ENCODE measurements at regions of chr9 and their contacts with region 1.

Region 1: DNA sequence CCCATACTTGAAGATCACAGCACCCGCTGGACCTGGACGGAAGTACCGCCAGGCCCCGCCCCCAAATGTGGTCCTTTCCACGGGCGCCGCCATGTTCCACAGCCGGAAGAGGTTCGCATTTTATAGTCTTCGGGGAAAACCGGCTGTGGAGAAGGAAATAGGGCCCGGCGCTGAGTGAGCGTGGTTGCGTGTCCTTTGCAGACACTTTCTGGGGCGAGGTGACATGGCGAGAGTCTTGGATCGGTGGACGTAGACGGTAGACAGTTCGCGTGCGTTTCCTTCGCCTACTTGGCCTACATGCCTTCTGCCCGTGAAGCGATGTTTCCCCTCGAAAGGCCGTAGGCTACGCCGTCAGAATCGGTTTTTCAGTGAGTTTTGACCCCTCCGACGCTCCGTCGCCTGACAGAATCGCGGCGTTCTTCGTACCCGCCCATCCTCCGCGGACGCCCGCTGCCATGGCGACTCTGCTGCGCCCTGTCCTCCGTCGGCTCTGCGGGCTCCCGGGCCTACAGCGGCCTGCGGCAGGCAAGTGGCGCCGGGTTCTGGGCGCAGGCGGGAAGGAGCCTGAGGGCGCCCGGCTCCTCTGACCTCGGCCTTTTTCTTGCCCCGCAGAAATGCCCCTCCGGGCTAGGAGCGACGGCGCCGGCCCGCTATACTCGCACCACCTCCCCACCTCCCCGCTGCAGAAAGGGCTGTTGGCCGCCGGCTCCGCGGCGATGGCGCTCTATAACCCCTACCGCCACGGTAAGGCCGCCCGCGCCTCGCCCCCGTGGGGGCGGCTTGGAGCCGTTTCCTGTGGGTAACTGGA is at the starts of genes COQ4 and TRUB2:
- DNase-seq: peak; percentile 89
- ATAC-seq: peak; percentile 93
- H3K4me3 ChIP-seq: peak within 1 kb of the TSS; percentile 93 to 99 (median 94)
- H3K27ac ChIP-seq: peak within 1 kb of the TSS; percentile 93
- H3K4me1 ChIP-seq: peaks cover 23% of the 10 kb centered on the region
- H3K27me3 ChIP-seq: no peaks in the 10 kb centered on the region; a peak in 1 of 5 replicates
- CTCF ChIP-seq: no peak; the same call in 1 of the 2 replicates
- EP300 ChIP-seq: peak in 1 of 2 experiments; percentile 12; a peak in 1 of 4 replicates
- POLR2A ChIP-seq: peak; percentile 80 to 85; a peak in 3 of 4 replicates
- RAD21 ChIP-seq: peak; percentile 25
- total RNA-seq, gene COQ4: 16.2 and 26.1 TPM in 2 replicates
- total RNA-seq, gene TRUB2: 41.2 and 57.8 TPM in 2 replicates

Region 2: GRCh38 chr9:128339771-128340690 is 17.4 kb after region 1 on chr9 and contains the start of gene SLC27A4:
- CTCF ChIA-PET with region 1: no interaction called
- POLR2A ChIA-PET with region 1: no interaction called
- in situ Hi-C with region 1: no loop called
- intact Hi-C with region 1: loop called (anchors 2 kb)
- DNase-seq: peak; percentile 70
- ATAC-seq: peak; percentile 86
- H3K4me3 ChIP-seq: peak within 1 kb of the TSS; percentile 85 to 95 (median 87)
- H3K27ac ChIP-seq: peak within 1 kb of the TSS; percentile 68
- H3K4me1 ChIP-seq: peaks cover 19% of the 10 kb centered on the region
- H3K27me3 ChIP-seq: no peaks in the 10 kb centered on the region
- CTCF ChIP-seq: no peak
- EP300 ChIP-seq: no peak
- POLR2A ChIP-seq: peak in 1 of 2 experiments; percentile 69
- RAD21 ChIP-seq: no peak
- total RNA-seq, gene SLC27A4: 9.3 and 18.8 TPM in 2 replicates

Region 3: DNA sequence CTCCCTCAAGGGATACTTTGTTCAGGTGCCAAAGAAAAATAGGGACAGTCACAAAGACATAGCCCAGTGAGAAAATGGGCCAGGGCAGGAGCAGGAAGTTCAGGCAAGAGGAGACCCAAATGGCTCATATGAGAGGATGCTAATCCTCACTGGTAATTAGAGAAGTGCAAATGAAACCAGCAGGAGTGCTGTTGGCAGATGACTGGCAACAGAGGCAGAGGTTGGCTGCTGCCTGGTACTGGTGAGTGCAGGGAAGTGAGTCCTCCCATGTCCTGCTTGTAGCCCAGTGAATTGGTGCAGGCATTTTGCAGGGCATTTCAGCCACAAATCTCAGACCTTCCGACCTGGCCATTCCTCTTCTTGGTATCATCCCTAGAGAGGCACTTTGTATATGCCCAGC is 156.7 kb after region 1 on chr9:
- CTCF ChIA-PET with region 1: no interaction called
- POLR2A ChIA-PET with region 1: no interaction called
- in situ Hi-C with region 1: no loop called
- intact Hi-C with region 1: no loop called
- DNase-seq: no peak
- ATAC-seq: no peak
- H3K4me3 ChIP-seq: no peak overlapping the region
- H3K27ac ChIP-seq: no peak overlapping the region
- H3K4me1 ChIP-seq: no peaks in the 10 kb centered on the region
- H3K27me3 ChIP-seq: no peaks in the 10 kb centered on the region
- CTCF ChIP-seq: no peak
- EP300 ChIP-seq: no peak
- POLR2A ChIP-seq: no peak
- RAD21 ChIP-seq: no peak

Measured in HepG2 (cell line).